Activated naive CD4-positive, alpha-beta T cell treated with anti-CD3 and anti-CD28 coated beads, Interleukin-2, amount 10 ng/mL, durations not matched to agents 7 days and 5 days (primary cell): ENCODE measurements at regions of chr14 and their contacts with region 1.

Region 1: DNA sequence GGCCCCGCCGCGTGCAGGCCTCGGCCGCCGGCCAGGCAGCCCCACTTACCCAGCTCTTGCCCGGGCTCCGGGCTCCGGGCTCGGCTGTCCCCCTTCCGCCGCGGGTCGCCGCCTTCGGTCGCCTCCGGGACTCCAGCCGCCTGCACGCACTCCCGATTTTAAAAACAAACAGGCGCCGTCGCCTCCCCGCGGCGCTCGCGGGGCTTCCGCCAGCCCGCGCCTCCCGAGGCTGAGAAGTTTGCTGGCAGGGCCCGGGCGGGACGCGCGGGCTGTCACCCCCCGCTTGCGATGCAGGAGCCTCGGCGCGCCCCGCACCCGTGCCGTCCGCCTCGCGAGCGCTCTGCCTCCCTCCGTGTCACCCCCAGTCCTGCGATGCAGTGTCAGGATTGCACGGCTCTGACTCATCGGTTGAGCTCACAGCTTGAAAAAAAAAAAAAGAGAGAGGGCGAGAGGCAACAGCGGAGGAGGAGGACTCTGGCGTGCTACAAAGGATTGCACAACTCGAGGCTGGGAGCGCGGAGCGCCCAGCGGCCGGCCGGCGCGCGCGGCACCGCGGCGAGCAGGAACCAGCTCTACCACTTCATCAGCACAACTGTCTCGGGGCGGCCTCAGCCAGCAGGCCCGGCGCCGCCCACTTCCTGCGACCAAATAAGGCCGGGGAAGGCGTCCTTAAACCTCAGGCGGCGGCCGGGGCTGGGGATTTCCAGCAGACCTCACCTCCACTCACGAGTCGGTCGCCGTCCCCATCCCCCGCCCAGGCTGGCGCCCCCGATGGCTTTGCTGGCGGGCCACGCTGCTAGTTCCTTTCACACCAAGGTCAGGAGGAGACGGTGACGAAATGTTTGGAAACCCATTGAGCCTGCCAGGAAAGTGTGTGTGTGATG is 45.8 kb upstream of the PNMA1 start:
- DNase-seq: peak; percentile 97
- H3K4me3 Mint-ChIP-seq: peak overlapping the region; percentile 87
- H3K27ac Mint-ChIP-seq: peak overlapping the region; percentile 97
- H3K4me1 Mint-ChIP-seq: peaks cover 77% of the 10 kb centered on the region
- H3K27me3 Mint-ChIP-seq: no peaks in the 10 kb centered on the region

Region 2: DNA sequence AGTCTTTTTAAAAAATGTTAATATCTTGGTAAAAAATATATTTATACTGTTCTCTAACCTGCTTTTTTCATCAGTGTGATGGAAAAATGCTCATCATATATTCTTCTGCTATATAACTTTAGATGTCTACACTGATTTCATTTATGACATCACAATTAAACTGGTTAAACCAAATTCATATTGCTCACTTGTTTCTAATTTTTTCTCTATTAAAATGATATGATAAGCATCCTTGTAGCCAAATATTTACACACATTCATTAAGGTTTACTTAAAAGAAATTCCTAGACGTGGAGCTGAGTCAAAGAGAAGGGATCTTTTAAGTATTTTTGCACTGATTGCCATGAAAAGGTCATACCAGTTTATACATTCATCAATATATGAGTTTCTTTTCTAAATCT is 195.1 kb before region 1 on chr14:
- CTCF ChIA-PET with region 1: no interaction called
- DNase-seq: no peak
- H3K4me3 Mint-ChIP-seq: no peak overlapping the region
- H3K27ac Mint-ChIP-seq: no peak overlapping the region
- H3K4me1 Mint-ChIP-seq: peaks cover 35% of the 10 kb centered on the region
- H3K27me3 Mint-ChIP-seq: no peaks in the 10 kb centered on the region

Region 3: DNA sequence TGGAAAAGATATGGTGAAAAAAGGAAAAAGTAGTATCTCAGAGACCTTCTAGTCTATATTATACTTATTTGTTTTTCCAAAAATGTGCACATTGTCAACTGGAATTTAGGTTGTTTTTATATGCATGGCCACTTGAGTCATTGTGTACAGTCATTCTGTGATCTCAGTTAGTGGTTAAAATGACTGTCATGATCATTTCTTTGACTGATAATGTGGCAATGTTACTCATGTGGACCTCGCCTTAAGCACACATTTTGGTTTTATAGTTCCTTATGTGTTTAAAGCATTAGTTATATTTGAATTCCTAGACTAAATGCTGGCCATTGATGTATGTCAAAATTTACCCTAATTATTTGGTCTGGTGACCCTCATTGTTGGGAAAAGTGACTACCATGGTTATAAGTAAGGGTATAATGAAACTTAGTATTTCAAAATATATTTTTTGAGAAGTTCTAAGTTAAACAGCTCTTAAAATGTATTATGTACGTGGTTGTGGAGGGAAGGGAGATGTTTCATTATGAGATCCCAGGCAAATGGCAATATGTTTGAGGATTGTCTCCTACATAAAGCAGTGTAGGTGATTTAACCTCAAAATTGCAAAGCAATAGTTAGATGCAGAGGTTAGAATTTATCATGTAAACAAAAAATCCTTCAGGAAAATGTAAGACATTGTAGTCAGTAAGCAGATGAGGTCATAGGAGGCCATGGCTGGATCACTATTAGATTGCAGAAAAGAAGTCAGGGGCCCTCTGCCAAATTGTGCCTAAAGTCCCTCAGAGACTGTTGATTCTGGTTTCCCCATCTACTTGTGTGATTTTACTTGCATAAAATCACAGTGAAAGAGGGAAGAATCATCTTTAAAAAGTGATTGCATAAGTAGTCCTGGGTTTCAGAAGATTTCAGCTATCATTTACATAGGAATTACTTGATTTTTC is 63.2 kb before region 1 on chr14:
- CTCF ChIA-PET with region 1: no interaction called
- DNase-seq: no peak
- H3K4me3 Mint-ChIP-seq: no peak overlapping the region
- H3K27ac Mint-ChIP-seq: no peak overlapping the region
- H3K4me1 Mint-ChIP-seq: peaks cover 10% of the 10 kb centered on the region
- H3K27me3 Mint-ChIP-seq: no peaks in the 10 kb centered on the region

Region 4: GRCh38 chr14:73741386-73741875 is 18.5 kb before region 1 on chr14:
- CTCF ChIA-PET with region 1: interaction called, 136 read pairs
- DNase-seq: peak; percentile 87
- H3K4me3 Mint-ChIP-seq: peak overlapping the region; percentile 74
- H3K27ac Mint-ChIP-seq: peak overlapping the region; percentile 91
- H3K4me1 Mint-ChIP-seq: peaks cover 80% of the 10 kb centered on the region
- H3K27me3 Mint-ChIP-seq: no peaks in the 10 kb centered on the region

Region 5: GRCh38 chr14:73771848-73772638 is 12.1 kb after region 1 on chr14:
- CTCF ChIA-PET with region 1: interaction called, 45 read pairs
- DNase-seq: peak; percentile 79
- H3K4me3 Mint-ChIP-seq: peak overlapping the region; percentile 49
- H3K27ac Mint-ChIP-seq: peak overlapping the region; percentile 91
- H3K4me1 Mint-ChIP-seq: peaks cover 73% of the 10 kb centered on the region
- H3K27me3 Mint-ChIP-seq: no peaks in the 10 kb centered on the region

Region 6: DNA sequence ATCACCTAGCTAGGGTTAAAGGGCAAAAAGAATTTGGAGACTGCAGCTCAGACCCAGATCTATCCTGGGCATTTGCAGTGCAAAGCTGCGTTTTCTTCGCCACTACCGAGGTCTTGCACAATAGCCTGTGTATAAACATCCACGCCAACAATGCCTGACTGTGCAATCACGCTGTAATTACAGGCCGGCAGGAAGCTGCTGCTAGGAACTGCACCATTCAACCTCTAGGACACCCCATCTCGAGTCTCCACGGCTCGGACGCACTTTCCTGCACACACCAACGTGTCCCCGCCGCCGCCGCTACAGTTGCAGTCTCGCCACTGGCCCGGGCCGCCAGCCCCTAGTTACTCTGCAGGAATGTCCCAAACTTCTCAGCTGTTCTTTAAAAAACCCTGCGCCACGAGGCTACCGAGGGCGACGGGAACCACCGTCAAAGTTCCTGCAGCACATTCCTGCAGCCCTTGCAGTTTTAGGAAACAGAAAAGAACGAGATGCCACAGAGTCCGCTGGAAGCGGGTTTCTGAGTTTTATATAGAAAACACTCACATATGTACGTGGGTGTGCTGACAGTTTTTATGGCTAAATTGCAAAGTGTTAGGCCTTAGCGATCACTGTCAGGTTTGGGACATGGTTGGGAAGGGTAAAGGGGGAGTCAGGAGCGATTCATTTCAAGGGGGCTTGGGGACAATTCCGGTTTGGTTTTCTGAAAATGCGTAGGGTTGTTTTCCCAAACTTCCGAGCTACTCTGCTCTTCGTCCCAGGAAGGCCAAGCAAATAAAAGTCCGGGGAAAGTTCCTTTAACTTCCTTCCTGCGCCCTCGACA is 26.1 kb after region 1 on chr14:
- CTCF ChIA-PET with region 1: interaction called, 21 read pairs
- DNase-seq: peak; percentile 83
- H3K4me3 Mint-ChIP-seq: peak overlapping the region; percentile 91
- H3K27ac Mint-ChIP-seq: peak overlapping the region; percentile 96
- H3K4me1 Mint-ChIP-seq: peaks cover 61% of the 10 kb centered on the region
- H3K27me3 Mint-ChIP-seq: no peaks in the 10 kb centered on the region

Region 7: DNA sequence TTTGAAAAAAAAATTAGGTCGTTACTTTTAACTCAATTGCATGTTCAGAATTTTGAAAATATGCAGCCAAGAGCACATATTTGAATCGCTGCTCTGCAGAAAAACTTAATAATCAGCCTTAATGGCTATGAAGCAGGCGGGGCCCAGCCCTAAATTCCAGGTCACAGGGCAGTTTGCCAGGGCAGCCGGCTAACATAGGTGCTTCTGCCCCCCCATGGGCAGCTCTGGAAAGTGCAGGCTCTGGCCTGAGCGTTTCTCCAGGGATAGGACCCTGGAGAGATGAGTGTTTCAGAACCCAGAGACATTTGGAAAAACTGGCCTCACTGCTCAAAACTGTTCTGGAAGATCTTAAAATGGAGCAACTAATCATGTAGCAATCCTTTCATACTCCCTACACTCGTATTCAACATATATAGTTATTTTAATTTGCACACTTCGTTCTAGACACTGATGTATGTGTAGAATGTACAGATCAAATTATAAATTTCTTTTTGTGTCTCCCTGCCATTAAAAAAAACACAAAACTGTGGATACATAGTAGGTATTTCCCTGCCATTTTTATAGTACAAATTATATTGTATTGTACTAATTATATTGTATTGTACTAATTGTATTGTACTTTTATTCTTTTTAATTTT is 65.7 kb after region 1 on chr14:
- CTCF ChIA-PET with region 1: interaction called, 23 read pairs
- DNase-seq: peak; percentile 85
- H3K4me3 Mint-ChIP-seq: no peak overlapping the region
- H3K27ac Mint-ChIP-seq: no peak overlapping the region
- H3K4me1 Mint-ChIP-seq: peaks cover 8% of the 10 kb centered on the region
- H3K27me3 Mint-ChIP-seq: peaks cover 18% of the 10 kb centered on the region

Region 8: DNA sequence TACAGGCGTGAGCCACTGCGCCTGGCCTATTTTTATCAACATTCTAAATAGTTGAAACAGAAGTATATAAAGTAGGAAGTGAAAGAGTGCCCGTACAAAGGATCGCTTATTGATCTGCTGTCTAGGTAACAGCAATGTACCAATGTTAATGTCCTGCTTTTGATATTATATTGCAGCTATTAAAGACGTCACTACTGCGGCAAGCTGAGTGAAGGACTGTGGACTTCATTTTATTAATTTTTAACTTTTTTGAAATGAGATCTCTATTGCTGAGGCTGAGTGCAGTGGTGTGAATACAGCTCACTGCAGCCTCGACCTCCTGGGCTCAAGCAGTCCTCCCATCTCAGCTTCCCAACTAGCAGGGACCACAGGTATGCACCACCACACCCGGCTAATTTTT is 102.5 kb after region 1 on chr14:
- CTCF ChIA-PET with region 1: no interaction called
- DNase-seq: no peak
- H3K4me3 Mint-ChIP-seq: no peak overlapping the region
- H3K27ac Mint-ChIP-seq: no peak overlapping the region
- H3K4me1 Mint-ChIP-seq: no peaks in the 10 kb centered on the region
- H3K27me3 Mint-ChIP-seq: no peaks in the 10 kb centered on the region

Region 9: GRCh38 chr14:74240794-74241651 is 481.1 kb after region 1 on chr14:
- CTCF ChIA-PET with region 1: no interaction called
- DNase-seq: no peak
- H3K4me3 Mint-ChIP-seq: peak overlapping the region; percentile 23
- H3K27ac Mint-ChIP-seq: no peak overlapping the region
- H3K4me1 Mint-ChIP-seq: peaks cover 10% of the 10 kb centered on the region
- H3K27me3 Mint-ChIP-seq: peaks cover 100% of the 10 kb centered on the region